ENCODE measurements at regions of chr1 and their contacts with region 1.

Region 1: GRCh38 chr1:90313757-90314156 is 318.8 kb downstream of the ZNF326 start:
- DNase-seq: peak; percentile 57
- H3K4me3 ChIP-seq: no peak overlapping the region
- H3K27ac ChIP-seq: peak overlapping the region; percentile 66
- H3K4me1 ChIP-seq: peaks cover 62% of the 10 kb centered on the region
- H3K27me3 ChIP-seq: no peaks in the 10 kb centered on the region
- CTCF ChIP-seq: no peak

Region 2: GRCh38 chr1:90027281-90027680 is 286.5 kb before region 1 on chr1:
- CTCF ChIA-PET with region 1: no interaction called
- POLR2A ChIA-PET with region 1: interaction called, 15 read pairs
- intact Hi-C with region 1: no loop called
- DNase-seq: no peak
- H3K4me3 ChIP-seq: no peak overlapping the region
- H3K27ac ChIP-seq: no peak overlapping the region
- H3K4me1 ChIP-seq: no peaks in the 10 kb centered on the region
- H3K27me3 ChIP-seq: no peaks in the 10 kb centered on the region
- CTCF ChIP-seq: no peak

Region 3: DNA sequence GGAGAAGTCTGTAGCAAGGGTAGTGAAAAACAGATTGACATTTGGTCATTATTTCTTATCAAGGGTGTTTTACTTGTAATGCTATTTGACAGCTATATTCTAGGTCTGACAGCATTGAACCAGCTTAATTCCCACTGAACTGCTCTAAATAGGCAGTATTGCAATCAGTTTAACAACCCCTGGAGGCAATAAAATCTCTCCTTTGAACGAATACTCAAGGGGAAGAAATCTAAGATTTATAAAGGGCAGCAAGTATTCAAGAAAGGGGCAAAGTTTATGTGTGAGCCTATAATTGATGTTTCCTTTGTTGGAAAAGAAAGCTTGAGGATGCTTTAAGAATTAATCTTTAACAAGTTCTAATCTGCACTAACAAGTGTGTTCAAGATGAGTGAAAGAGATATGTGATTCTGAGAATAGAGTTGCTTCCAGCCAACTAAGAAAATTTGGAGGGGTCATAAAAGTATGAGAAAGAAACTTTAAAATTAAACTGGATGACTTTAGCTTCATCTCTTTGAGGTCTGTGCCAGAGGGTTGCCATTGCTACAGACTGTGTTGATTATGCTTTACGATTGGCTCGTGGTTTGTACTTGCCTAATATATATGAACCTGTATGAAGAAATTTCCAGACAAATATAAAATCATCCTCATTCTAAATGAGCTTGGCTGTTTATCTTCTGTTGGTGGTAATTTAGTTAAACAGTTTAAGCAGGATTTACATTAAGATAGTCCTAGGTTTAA is 246.4 kb before region 1 on chr1:
- CTCF ChIA-PET with region 1: no interaction called
- POLR2A ChIA-PET with region 1: no interaction called
- intact Hi-C with region 1: loop called (anchors 1 kb)
- DNase-seq: peak; percentile 96
- H3K4me3 ChIP-seq: no peak overlapping the region
- H3K27ac ChIP-seq: peak overlapping the region; percentile 95
- H3K4me1 ChIP-seq: peaks cover 55% of the 10 kb centered on the region
- H3K27me3 ChIP-seq: no peaks in the 10 kb centered on the region
- CTCF ChIP-seq: no peak

Region 4: GRCh38 chr1:90114521-90115141 is 199.1 kb before region 1 on chr1:
- CTCF ChIA-PET with region 1: interaction called, 6 read pairs
- POLR2A ChIA-PET with region 1: no interaction called
- intact Hi-C with region 1: loop called (anchors 1 kb)
- DNase-seq: peak; percentile 90
- H3K4me3 ChIP-seq: no peak overlapping the region
- H3K27ac ChIP-seq: no peak overlapping the region
- H3K4me1 ChIP-seq: peaks cover 26% of the 10 kb centered on the region
- H3K27me3 ChIP-seq: no peaks in the 10 kb centered on the region
- CTCF ChIP-seq: peak; percentile 86

Region 5: DNA sequence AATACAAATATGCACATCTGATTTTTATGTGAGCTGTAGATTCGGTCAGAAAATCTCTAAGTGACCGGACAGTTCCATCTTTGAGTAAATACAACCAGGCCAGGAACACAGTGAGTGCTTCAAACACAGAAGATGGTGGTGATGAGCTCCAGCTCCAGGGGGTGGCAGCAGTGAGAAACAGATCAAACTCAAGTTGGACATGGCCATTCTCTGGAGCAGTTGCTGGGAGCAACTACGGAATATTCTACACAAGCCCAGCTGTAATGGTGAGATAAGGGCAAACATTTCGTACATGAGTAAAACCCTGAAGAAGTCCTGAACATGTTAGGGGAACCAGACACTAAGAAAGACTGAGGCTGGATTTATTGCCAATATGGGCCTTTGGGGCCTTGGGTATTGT is 302.6 kb after region 1 on chr1:
- CTCF ChIA-PET with region 1: no interaction called
- POLR2A ChIA-PET with region 1: no interaction called
- intact Hi-C with region 1: loop called (anchors 2 kb)
- DNase-seq: peak; percentile 73
- H3K4me3 ChIP-seq: no peak overlapping the region
- H3K27ac ChIP-seq: no peak overlapping the region
- H3K4me1 ChIP-seq: peaks cover 32% of the 10 kb centered on the region
- H3K27me3 ChIP-seq: no peaks in the 10 kb centered on the region
- CTCF ChIP-seq: peak; percentile 70